ENCODE measurements at regions of chr6 and their contacts with region 1.

Region 1: GRCh38 chr6:35786810-35787209 is 6.0 kb downstream of the CLPSL1 start:
- DNase-seq: no peak
- ATAC-seq: peak in 1 of 4 donors; percentile 21
- H3K4me3 ChIP-seq: no peak overlapping the region
- H3K27ac ChIP-seq: no peak overlapping the region
- H3K4me1 ChIP-seq: peaks cover 0 to 4% (median 0%) of the 10 kb centered on the region in 12 donors
- H3K27me3 ChIP-seq: peaks cover 10 to 64% (median 32%) of the 10 kb centered on the region in 9 donors
- CTCF ChIP-seq: no peak
- POLR2A ChIP-seq: no peak

Region 2: DNA sequence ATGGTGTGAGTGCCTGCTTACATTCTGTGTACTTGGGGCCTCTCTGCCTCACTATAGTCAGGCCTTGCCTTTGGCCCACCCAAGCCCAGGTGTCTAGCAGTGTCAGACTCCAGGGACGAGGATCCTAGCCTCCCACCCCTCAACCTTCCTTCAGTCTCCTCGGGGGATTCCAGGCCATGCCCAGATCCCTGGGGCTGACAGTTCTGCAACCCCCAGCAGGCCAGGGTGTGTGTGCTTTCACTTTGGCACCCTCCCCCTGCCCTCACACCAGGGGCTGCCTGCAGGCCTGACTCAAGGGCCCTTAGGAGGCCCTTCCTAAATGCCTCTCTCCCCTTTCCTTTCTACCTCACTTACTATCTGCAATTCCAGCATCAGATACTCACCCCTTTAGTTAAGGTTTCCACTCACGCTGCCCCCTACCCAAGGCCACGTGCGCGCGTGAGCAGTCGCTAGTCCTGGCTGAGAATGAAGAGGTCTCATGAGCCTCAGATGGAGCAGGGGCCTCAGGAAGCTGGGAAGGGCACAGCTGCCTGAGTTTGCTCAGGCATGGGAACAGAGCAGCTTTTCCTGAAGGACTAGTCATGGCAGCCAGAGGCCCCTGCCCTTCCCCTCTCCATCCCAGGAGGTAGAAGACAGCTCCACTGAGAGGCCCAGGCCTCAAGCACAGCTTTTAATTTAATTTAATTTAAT is 11.2 kb after region 1 on chr6:
- intact Hi-C with region 1: loop called in 2 of 10 experiments (anchors 1 kb)
- DNase-seq: no peak
- ATAC-seq: peak in 1 of 4 donors; percentile 31
- H3K4me3 ChIP-seq: no peak overlapping the region
- H3K27ac ChIP-seq: no peak overlapping the region
- H3K4me1 ChIP-seq: no peaks in the 10 kb centered on the region
- H3K27me3 ChIP-seq: peaks cover 0 to 21% (median 0%) of the 10 kb centered on the region in 9 donors
- CTCF ChIP-seq: no peak
- POLR2A ChIP-seq: no peak